BJ (cell line): ENCODE measurements at regions of chr3 and their contacts with region 1.

Region 1: DNA sequence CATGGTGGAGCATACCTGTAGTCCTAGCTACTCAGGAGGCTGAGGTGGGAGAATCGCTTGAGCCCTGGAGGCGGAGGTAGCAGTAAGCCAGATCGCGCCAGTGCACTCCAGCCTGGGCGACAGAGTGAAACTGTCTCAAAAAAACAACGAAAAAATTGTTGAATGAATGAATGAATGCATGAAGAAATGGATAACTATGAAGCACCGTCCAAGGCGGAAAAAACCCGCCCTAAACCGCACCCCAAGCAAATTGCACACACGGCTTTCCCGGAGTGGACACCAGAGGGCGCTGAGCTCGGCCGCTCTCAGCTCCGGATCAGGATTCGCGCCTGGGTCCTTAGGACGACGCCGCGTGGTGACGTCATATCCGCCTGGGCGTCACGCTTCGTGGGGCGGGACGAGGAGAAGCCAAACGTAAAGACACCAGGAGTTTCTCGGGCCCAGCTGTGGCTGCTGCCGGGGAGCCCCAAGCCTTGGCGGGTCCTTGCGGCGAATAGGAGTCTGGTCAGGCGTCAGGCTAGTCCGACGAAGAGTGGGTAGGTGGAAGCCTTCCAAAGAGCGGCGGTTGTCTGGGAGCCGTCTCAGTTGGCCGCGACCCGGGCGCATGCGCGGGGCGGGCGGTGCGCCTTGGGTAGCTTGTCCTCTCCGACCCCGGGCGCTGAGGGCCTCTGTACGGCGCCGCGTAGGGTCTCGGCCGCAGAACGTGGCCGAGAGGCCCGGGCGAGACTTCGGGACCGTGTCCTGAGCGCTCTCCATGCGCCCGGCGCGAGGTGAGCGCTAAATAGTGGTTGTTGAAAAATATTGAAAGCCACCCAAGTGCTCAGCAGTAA is at the starts of genes HTD2 and RPP14:
- DNase-seq: peak; percentile 75
- H3K4me3 ChIP-seq: peak within 1 kb of the TSS; percentile 77
- H3K27me3 ChIP-seq: peaks cover 3% of the 10 kb centered on the region; the same call in 1 of the 2 replicates
- CTCF ChIP-seq: peak; percentile 97
- polyA plus RNA-seq, gene HTD2: 5.2 and 8.3 TPM in 2 replicates
- polyA plus RNA-seq, gene RPP14: 10.9 and 13.3 TPM in 2 replicates

Region 2: DNA sequence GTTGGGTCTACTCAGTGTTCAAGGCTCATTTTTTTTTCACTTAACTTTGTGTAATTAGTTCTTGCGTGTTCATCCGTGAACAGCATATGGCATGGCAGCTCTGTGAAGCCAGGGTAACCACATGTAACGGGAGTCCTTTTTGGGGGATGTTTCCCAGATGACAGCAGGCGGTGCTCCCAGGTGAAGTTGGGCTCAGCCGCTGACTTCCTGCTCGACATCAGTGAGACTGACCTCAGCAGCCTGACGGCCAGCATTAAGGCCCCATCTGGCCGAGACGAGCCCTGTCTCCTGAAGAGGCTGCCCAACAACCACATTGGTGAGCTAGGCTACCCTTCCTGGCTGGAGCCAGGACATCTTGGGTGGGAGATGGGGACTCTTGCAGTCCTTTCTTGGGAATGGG is 158.0 kb before region 1 on chr3:
- CTCF ChIA-PET with region 1: no interaction called
- POLR2A ChIA-PET with region 1: no interaction called
- DNase-seq: no peak
- H3K4me3 ChIP-seq: no peak overlapping the region
- H3K27me3 ChIP-seq: no peaks in the 10 kb centered on the region
- CTCF ChIP-seq: no peak

Region 3: DNA sequence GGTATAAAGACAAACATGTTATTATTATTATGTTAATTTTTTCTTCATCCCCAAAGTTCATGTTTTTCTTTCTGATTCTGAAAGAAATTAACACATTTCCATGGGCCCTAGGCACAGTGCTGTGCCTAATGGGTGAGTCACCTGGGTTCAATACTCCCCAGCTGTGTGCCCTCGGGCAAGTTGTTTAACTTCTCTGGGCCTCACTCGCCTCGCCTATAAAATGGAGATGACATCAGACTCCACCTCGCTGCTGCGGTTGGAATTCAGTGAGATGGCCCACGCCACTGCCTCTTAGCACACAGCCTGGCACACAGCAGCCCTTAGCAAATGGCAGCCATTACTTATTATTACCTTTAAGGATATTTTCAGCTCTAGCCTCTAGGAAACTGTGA is 117.9 kb before region 1 on chr3:
- CTCF ChIA-PET with region 1: interaction called, 240 read pairs
- POLR2A ChIA-PET with region 1: no interaction called
- DNase-seq: no peak
- H3K4me3 ChIP-seq: no peak overlapping the region
- H3K27me3 ChIP-seq: no peaks in the 10 kb centered on the region; the same call in 1 of the 2 replicates
- CTCF ChIP-seq: no peak

Region 4: DNA sequence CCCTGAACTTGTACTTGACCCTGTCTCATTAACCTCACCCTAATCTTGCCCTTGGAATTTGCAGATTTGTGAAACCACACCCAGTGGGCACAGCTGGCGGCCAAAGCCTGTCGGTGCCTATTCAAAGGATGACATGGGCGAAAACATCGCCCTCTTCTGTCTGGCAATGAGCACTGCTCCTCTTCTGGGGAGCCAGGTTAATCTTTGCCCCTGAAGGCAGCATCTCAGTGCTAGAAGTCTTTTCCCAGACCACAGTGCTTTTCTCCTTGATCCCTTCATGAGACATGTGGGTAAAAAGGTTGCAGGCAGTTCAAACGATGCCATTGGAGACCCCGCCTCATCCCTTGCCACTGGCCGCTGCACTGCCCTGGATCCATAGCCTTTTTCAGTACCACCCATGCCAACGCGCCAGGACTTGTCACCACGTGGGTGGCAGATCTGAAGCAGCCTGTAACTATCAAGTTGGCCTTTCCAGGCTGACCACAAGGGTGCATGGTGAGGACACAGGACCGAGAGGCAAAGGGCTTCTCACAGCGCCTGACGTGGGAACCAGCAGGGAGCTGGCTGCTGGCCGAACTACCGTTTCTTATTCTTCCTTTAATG is 88.8 kb before region 1 on chr3:
- CTCF ChIA-PET with region 1: interaction called, 11 read pairs
- POLR2A ChIA-PET with region 1: no interaction called
- DNase-seq: no peak
- H3K4me3 ChIP-seq: no peak overlapping the region
- H3K27me3 ChIP-seq: peaks cover 3% of the 10 kb centered on the region
- CTCF ChIP-seq: peak; percentile 86

Region 5: DNA sequence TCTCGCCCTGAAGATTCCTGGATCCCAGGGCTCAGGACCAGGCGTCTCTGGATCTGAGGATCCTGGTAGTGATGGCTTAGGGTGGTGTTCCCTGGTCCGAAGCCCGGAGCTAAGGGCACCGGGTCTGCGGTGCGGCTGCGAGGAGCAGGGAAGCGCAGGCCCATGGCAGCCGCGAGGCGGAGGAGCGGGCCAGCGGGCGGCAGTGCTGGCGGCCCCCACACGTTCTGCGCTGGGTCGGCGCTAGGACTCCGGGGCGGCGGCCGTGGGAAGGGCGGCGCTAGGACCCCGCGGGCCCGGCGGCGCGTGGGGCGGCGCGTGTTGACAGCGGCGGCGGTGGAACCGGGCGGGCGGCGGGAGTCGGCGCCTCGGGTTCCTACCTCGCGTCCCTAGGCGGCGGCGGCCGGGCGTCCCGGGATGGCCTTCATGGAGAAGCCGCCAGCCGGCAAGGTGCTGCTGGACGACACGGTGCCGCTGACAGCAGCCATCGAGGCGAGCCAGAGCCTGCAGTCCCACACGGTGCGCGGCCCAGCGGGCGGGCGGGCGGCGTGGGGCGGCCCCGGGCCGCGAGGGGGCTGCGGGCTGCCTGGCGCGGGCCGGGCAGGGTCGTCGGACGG is 26.6 kb after region 1 on chr3 and contains the start of gene PXK:
- CTCF ChIA-PET with region 1: interaction called, 18 read pairs
- POLR2A ChIA-PET with region 1: interaction called, 3 read pairs
- DNase-seq: no peak
- H3K4me3 ChIP-seq: peak within 1 kb of the TSS; percentile 77
- H3K27me3 ChIP-seq: no peaks in the 10 kb centered on the region
- CTCF ChIP-seq: peak; percentile 3; the same call in 1 of the 2 replicates
- polyA plus RNA-seq, gene PXK: 36.4 and 38.9 TPM in 2 replicates

Region 6: GRCh38 chr3:58491506-58492402 is 185.7 kb after region 1 on chr3 and contains the start of gene KCTD6:
- CTCF ChIA-PET with region 1: interaction called, 15 read pairs
- POLR2A ChIA-PET with region 1: no interaction called
- DNase-seq: peak; percentile 62
- H3K4me3 ChIP-seq: peak within 1 kb of the TSS; percentile 78
- H3K27me3 ChIP-seq: no peaks in the 10 kb centered on the region; the same call in 1 of the 2 replicates
- CTCF ChIP-seq: peak; percentile 56
- polyA plus RNA-seq, gene KCTD6: 5.1 and 9.4 TPM in 2 replicates